SK-N-SH (cell line): ENCODE measurements at regions of chr7 and their contacts with region 1.

Region 1: GRCh38 chr7:35975851-35976454 is 175.1 kb downstream of the SEPTIN7 start:
- DNase-seq: peak; percentile 72
- H3K4me3 ChIP-seq: no peak overlapping the region
- H3K27ac ChIP-seq: no peak overlapping the region
- H3K4me1 ChIP-seq: peaks cover 0 to 5% of the 10 kb centered on the region in 2 experiments; a peak in 1 of 4 replicates
- H3K27me3 ChIP-seq: no peaks in the 10 kb centered on the region
- CTCF ChIP-seq: peak; percentile 96
- EP300 ChIP-seq: no peak
- RAD21 ChIP-seq: peak; percentile 99

Region 2: GRCh38 chr7:35508623-35509400 is 467.1 kb before region 1 on chr7:
- CTCF ChIA-PET with region 1: no interaction called
- POLR2A ChIA-PET with region 1: no interaction called
- DNase-seq: no peak
- H3K4me3 ChIP-seq: no peak overlapping the region
- H3K27ac ChIP-seq: no peak overlapping the region
- H3K4me1 ChIP-seq: peaks cover 2 to 5% of the 10 kb centered on the region in 2 experiments; a peak in 2 of 4 replicates
- H3K27me3 ChIP-seq: no peaks in the 10 kb centered on the region
- CTCF ChIP-seq: peak; percentile 37
- EP300 ChIP-seq: no peak
- RAD21 ChIP-seq: peak; percentile 28; the same call in 1 of the 2 replicates

Region 3: GRCh38 chr7:35801392-35802101 is 174.4 kb before region 1 on chr7:
- CTCF ChIA-PET with region 1: no interaction called
- POLR2A ChIA-PET with region 1: no interaction called
- DNase-seq: peak; percentile 85
- H3K4me3 ChIP-seq: peak overlapping the region; percentile 94 to 99
- H3K27ac ChIP-seq: peak overlapping the region; percentile 97 to 98
- H3K4me1 ChIP-seq: peaks cover 15 to 24% of the 10 kb centered on the region in 2 experiments; a peak in 3 of 4 replicates
- H3K27me3 ChIP-seq: no peaks in the 10 kb centered on the region
- CTCF ChIP-seq: peak; percentile 97
- EP300 ChIP-seq: no peak
- RAD21 ChIP-seq: peak; percentile 70

Region 4: GRCh38 chr7:36109013-36109627 is 133.2 kb after region 1 on chr7:
- CTCF ChIA-PET with region 1: no interaction called
- POLR2A ChIA-PET with region 1: no interaction called
- DNase-seq: no peak
- H3K4me3 ChIP-seq: no peak overlapping the region
- H3K27ac ChIP-seq: no peak overlapping the region
- H3K4me1 ChIP-seq: peaks cover 0 to 9% of the 10 kb centered on the region in 2 experiments; a peak in 2 of 4 replicates
- H3K27me3 ChIP-seq: no peaks in the 10 kb centered on the region
- CTCF ChIP-seq: no peak
- EP300 ChIP-seq: no peak
- RAD21 ChIP-seq: no peak

Region 5: DNA sequence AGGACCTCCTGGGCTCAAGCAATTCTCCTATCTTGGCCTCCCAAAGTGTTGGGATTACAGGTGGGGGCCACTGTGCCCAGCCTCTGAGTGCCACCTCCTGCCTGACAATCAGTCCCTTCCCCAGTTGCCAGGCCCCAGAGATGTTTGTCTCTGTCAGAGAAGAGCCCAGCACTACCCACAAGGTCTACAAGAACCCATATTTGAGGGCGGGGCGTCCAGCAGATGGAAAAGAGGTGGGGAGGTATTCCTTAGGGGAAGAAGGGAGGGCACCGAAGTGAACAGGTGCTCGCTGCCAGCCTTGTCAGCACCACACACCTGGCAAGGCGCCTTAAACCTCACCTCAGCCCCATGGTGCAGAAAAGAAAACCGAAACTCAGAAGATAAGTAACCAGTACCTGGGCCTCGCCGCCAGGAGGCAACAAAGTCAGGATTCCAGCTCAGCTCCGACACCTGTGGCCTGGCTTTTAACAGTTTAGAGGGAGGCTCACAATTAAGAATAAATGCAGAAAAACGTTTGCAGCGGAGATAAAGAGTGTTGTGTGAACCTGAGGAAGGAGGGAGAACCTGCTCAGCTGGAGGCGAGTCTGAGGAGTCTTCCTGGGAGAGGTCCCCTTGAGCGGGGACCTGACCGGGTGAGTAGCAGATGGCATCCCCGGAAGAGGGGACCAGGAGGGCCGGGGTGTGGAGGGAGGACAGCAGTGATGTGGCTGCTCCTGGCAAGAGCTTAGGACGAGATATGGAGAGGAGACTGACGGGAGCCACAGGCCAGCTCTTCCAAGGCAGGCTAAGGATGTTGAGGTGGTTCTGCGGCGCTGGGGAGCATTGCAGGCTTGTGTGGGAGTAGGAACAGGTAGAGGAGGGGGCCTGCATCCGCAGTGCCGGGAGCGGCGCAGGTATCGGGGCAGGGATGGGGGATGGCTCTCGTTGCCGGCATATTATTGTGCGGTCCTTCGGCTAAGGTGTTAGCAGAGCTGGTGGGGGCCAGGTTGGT is 336.7 kb after region 1 on chr7:
- CTCF ChIA-PET with region 1: interaction called, 58 read pairs
- POLR2A ChIA-PET with region 1: no interaction called
- DNase-seq: no peak
- H3K4me3 ChIP-seq: no peak overlapping the region
- H3K27ac ChIP-seq: no peak overlapping the region
- H3K4me1 ChIP-seq: peaks cover 0 to 10% of the 10 kb centered on the region in 2 experiments; a peak in 1 of 4 replicates
- H3K27me3 ChIP-seq: no peaks in the 10 kb centered on the region
- CTCF ChIP-seq: no peak
- EP300 ChIP-seq: no peak
- RAD21 ChIP-seq: no peak